A673 (cell line): ENCODE measurements at regions of chr2 and their contacts with region 1.

Region 1: GRCh38 chr2:96389736-96390135 is 54.2 kb downstream of the NCAPH start:
- DNase-seq: no peak
- H3K4me3 ChIP-seq: no peak overlapping the region
- H3K27ac ChIP-seq: no peak overlapping the region
- H3K4me1 ChIP-seq: peaks cover 5% of the 10 kb centered on the region
- H3K27me3 ChIP-seq: no peaks in the 10 kb centered on the region
- CTCF ChIP-seq: no peak

Region 2: GRCh38 chr2:96400049-96401000 is 10.6 kb after region 1 on chr2:
- CTCF ChIA-PET with region 1: interaction called, 10 read pairs
- POLR2A ChIA-PET with region 1: no interaction called
- intact Hi-C with region 1: no loop called
- DNase-seq: no peak
- H3K4me3 ChIP-seq: no peak overlapping the region
- H3K27ac ChIP-seq: no peak overlapping the region
- H3K4me1 ChIP-seq: no peaks in the 10 kb centered on the region
- H3K27me3 ChIP-seq: no peaks in the 10 kb centered on the region
- CTCF ChIP-seq: no peak

Region 3: DNA sequence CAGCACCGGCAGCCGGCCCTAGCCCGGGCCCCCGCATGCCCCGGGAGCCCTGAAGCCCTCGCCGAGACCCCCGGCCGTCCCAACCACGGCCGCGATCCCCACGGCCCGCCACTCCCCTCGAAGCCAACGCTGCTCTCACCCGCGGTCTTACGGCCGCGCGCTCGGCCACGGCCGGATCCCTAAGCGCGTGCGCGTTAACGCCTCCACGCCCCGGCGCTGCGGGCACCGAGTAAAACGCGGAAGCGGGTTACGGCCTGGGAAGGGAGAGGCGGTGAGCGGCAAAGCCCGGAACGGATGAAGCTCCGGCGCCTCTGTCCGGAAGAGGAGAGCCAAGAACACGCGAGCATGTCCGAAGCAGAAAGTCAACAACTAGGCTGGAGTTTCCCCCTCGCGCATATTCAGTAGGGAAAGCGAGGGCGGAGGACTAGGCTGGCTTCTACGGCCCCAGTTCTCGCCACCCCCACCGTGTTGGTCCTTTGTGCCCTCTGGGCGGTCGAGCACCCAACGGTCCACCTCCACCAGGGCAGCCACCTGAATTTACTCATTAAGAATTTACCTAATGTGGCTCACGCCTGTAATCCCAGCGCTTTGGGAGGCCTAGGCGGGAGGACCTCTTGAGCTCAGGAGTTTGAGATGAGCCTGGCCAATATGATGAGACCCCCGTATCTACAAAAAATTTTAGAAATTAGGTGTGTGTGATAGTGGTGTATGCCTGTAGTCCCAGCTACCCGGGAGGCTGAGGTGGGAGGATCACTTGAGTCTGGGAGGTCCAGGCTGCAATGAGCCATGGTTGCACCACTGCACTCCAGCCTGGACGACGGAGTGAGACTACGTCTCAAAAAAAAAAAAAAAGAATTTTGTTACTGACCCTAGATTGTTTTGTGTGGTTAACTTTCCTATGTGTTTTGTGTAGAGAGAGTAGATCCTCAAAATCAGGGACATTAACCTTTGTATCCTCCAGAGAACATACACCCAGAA is 248.7 kb after region 1 on chr2 and contains the start of gene KANSL3:
- CTCF ChIA-PET with region 1: no interaction called
- POLR2A ChIA-PET with region 1: no interaction called
- intact Hi-C with region 1: no loop called
- DNase-seq: peak; percentile 95
- H3K4me3 ChIP-seq: peak within 1 kb of the TSS; percentile 93
- H3K27ac ChIP-seq: peak within 1 kb of the TSS; percentile 82
- H3K4me1 ChIP-seq: peaks cover 27% of the 10 kb centered on the region
- H3K27me3 ChIP-seq: no peaks in the 10 kb centered on the region
- CTCF ChIP-seq: no peak
- total RNA-seq, gene KANSL3: 71.8 and 77.9 TPM in 2 replicates